ENCODE measurements at regions of chr3 and their contacts with region 1.

Region 1: GRCh38 chr3:12135029-12135657 is 23.6 kb downstream of the TIMP4 start:
- DNase-seq: peak; percentile 45
- H3K4me3 Mint-ChIP-seq: no peak overlapping the region
- H3K27ac Mint-ChIP-seq: no peak overlapping the region
- H3K4me1 Mint-ChIP-seq: no peaks in the 10 kb centered on the region
- H3K27me3 Mint-ChIP-seq: peaks cover 14% of the 10 kb centered on the region

Region 2: GRCh38 chr3:12175844-12176453 is 40.8 kb after region 1 on chr3:
- intact Hi-C with region 1: loop called (anchors 1 kb)
- DNase-seq: no peak
- H3K4me3 Mint-ChIP-seq: no peak overlapping the region
- H3K27ac Mint-ChIP-seq: no peak overlapping the region
- H3K4me1 Mint-ChIP-seq: peaks cover 48% of the 10 kb centered on the region
- H3K27me3 Mint-ChIP-seq: no peaks in the 10 kb centered on the region

Region 3: DNA sequence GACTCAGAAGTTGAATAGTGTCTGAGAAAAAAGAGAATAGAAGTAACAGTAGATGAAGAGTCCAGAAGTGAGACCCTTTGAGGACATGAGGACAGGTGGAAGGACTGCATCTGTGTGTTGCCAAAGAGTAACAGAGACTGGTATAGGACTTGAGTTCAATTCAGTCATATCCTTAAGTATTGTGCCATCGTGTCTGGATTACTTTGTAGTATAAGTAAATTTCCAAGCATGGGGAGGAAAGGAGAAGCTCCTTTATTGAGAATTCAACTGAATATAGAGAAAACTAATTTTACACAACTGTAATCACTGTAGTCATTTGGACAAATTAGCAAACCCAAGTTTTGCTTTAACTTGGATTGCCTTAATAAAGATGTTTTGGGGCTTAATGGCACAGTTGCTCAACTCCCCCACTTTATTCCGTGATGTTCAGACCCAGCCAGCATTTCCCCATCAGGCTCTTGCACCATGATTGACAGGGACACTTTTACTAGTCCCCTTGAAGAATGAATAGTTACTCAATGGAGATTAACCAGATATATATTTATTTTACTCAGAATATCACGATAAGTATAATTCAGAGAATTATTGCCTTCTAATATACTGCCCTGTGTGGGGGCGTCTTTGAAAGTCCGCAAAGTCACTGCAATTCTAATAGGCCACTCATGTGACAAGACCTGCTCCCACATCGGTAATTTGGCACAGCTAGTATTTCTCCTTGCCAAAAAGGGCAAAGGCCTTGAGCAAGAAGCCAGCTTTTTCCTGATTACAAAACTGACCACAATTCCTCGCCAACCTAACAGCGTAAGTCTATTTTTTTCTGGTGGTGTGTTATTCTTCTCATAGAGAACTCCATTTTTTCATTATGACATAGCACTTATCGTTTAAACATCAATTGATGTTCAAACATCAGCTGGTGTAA is 215.0 kb after region 1 on chr3:
- intact Hi-C with region 1: loop called (anchors 5 kb)
- DNase-seq: no peak
- H3K4me3 Mint-ChIP-seq: no peak overlapping the region
- H3K27ac Mint-ChIP-seq: no peak overlapping the region
- H3K4me1 Mint-ChIP-seq: peaks cover 5% of the 10 kb centered on the region
- H3K27me3 Mint-ChIP-seq: peaks cover 10% of the 10 kb centered on the region

Region 4: GRCh38 chr3:12706504-12707253 is 571.5 kb after region 1 on chr3:
- intact Hi-C with region 1: loop called (anchors 5 kb)
- DNase-seq: peak; percentile 53
- H3K4me3 Mint-ChIP-seq: no peak overlapping the region
- H3K27ac Mint-ChIP-seq: no peak overlapping the region
- H3K4me1 Mint-ChIP-seq: no peaks in the 10 kb centered on the region
- H3K27me3 Mint-ChIP-seq: peaks cover 8% of the 10 kb centered on the region

Region 5: DNA sequence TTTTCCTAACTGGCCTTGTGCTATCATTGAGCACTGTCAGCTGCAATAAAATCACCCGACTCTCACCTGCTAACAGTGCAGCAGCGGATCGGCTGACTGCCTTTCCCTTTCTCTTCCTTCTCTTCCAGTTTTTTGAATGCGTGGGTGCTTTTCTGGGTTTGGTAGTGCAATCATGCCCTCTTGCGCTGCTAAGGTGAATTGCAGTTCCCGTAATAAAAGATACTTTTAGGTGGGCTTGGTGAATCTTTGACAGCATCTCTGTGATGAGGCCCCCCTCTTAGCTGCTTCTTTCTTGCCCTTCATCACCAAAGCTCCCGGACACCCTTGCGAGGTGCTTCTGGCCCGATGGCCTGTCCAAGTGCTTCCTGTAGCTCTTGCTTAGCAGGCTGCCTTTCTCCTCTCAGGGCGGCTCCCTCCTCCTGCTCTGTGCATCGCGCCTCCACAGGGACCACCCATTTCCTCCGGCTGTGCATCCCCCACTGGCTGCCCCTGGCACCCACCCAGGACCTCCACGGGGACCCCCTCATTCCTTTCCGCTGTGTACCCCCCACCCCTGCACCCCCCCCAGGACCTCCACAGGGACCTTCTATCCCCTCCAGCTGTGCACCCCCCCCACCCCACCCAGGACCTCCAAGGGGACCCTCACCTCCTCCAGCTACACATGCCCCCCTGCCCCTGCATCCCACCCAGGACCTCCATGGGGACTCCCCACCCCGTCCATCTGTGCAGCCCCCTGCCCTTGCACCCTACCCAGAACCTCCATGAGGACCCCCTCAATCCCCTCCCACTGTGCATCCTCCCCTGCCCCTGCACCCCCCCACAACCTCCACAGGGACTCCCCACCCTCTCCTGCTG is 757.1 kb after region 1 on chr3:
- intact Hi-C with region 1: loop called (anchors 5 kb)
- DNase-seq: peak; percentile 16
- H3K4me3 Mint-ChIP-seq: no peak overlapping the region
- H3K27ac Mint-ChIP-seq: no peak overlapping the region
- H3K4me1 Mint-ChIP-seq: peaks cover 5% of the 10 kb centered on the region
- H3K27me3 Mint-ChIP-seq: peaks cover 39% of the 10 kb centered on the region

Measured in activated T-helper 1 cell treated with anti-CD3 and anti-CD28 coated beads, Interleukin-12 subunit alpha, Interleukin-12 subunit beta, Interleukin-2, Interleukin-4 antibody, amounts not matched to agents 30 ng/mL and 10 ng/mL and 1 ng/mL, durations not matched to agents 14 hours and 24 hours and 36 hours (primary cell).